ENCODE measurements at regions of chr1 and their contacts with region 1.

Region 1: DNA sequence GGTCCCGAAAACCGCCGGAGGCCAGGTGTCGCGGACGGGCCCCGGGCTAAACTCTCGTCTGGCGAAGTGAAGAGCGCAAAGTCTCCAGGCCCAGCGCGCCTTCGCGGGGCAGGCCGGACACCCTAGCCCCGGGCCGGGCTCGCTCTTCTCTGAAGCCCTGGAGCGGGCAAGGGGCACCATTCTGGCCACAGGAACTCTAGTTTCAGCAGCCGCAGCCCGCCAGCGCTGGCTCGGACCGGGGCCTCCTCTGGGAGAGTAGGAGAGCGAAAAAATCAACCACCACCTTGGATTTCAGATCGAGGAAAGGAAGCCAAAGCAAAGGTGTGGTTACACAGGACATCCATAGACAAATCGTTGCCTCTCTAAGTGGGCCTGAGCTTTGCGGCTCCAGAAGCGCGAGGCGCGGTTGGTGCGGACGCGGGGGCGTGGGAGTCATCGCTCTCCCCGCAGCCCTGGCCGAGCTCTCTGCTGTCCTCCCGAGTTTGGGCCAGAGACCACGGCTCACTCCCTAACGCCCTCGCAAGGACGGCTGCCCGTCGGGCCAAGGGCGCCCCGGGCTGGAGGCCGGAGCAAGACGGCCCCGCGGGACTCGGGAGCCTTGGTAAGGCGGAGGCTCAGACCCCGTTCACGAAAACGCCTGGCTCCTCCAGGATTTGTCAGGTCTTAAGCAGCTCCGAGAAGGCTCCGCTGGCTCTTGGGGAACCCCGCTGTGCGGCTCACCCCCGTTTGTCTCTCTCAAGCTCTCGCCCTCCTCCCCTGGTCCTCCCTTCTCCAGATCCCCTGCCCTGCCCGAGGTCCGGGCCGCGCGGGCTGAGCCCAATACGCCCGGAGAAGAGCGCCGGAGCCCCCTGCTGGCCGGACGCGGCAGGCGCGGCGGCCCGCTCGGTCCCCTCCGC is 132.9 kb upstream of the DPYD start:
- DNase-seq: peak; percentile 79
- CTCF ChIP-seq: peak; percentile 88

Region 2: DNA sequence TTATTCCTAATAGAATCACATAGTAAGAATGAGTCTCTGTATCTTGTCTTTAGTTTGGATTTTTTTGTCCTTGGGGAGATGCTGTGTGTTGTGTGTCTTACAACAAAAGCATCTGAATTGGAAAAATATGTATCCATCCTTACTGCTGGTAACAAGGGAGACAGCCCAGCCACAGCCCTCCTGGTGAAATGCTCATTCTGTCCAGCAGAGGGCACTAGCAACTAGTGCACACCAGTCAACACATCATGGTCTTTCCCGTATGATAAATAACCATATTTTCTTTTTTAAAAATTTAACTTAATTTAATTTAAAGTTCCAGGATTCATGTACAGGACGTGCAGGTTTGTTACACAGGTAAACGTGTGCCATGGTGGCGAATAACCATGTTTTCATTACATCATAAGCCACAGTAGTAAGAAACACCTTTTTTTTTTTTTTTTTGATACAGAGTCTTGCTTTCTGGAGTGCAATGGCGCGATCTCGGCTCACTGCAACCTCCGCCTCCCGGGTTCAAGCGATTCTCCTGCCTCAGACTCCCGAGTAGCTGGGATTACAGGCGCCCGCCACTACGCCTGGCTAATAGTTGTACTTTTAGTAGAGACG is 1087.1 kb before region 1 on chr1:
- in situ Hi-C with region 1: loop called (anchors 10 kb)
- DNase-seq: peak; percentile 32
- CTCF ChIP-seq: peak; percentile 91

Region 3: GRCh38 chr1:98019747-98020146 is 34.0 kb before region 1 on chr1:
- in situ Hi-C with region 1: no loop called
- DNase-seq: no peak
- CTCF ChIP-seq: no peak

Region 4: GRCh38 chr1:98133131-98133530 is 79.4 kb after region 1 on chr1:
- in situ Hi-C with region 1: no loop called
- DNase-seq: no peak
- CTCF ChIP-seq: no peak

Region 5: GRCh38 chr1:98232678-98233077 is 179.0 kb after region 1 on chr1:
- in situ Hi-C with region 1: no loop called
- DNase-seq: no peak
- CTCF ChIP-seq: no peak

Region 6: GRCh38 chr1:98468111-98468717 is 414.5 kb after region 1 on chr1:
- in situ Hi-C with region 1: loop called (anchors 25 kb)
- DNase-seq: peak; percentile 0
- CTCF ChIP-seq: peak; percentile 23